ENCODE measurements at regions of chr2 and their contacts with region 1.

Region 1: DNA sequence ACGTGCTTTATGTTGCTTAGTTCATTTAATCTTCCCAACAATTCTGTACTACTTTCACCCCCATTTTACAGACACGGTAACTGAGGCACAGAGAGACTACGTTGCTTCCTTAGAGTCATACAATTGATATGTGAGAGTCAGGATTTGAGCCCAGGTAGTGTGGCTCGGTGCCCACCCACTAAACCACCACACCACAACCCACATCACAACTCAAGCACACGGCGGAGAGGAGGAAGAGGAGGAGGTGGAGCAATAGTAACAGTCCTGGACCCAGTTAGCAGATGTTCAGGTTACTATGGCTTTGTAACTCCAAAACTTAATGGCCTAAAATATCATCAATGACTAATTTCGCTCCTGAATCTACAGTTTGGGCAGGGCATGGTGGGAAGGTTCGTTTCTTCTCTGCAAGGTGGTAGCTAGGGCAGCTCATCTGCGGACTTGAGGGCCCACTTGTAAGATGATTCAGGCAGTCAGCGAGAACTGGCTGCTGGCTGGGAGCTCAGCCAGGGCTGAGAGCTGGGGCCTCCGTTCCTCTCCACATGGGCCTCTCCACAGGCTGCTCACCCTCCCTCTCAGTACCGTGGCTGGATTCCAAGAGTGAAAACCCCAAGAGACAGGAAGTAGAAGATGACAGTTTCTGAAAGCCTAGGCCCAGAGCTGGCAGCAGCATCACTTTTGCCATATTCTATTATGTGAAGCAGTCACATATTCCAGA is 167.1 kb downstream of the ZFP36L2 start:
- DNase-seq: peak; percentile 97
- H3K4me3 ChIP-seq: no peak overlapping the region
- H3K27ac ChIP-seq: peak overlapping the region; percentile 8
- H3K4me1 ChIP-seq: peaks cover 30% of the 10 kb centered on the region
- H3K27me3 ChIP-seq: no peaks in the 10 kb centered on the region
- CTCF ChIP-seq: no peak

Region 2: DNA sequence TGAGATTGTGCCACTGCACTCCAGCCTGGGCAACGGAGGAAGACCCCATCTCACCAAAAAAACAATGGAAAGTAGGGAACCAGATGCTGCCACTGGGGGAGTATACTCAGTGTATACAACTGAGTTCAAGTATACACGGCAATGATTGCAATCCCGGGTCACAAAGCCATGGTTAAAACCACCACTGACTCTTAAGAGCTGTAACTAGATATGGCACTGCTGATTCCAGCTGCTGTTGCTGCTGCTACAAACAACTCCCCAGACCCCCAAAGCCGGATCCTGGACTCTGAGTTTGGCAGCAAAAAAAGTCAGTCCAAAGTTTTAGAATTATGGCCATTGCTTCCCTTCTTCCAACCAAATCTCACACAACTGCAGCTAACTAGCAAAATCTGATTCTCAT is 654.7 kb before region 1 on chr2:
- CTCF ChIA-PET with region 1: no interaction called
- POLR2A ChIA-PET with region 1: interaction called, 11 read pairs
- intact Hi-C with region 1: no loop called
- DNase-seq: no peak
- H3K4me3 ChIP-seq: no peak overlapping the region
- H3K27ac ChIP-seq: no peak overlapping the region
- H3K4me1 ChIP-seq: no peaks in the 10 kb centered on the region
- H3K27me3 ChIP-seq: no peaks in the 10 kb centered on the region
- CTCF ChIP-seq: no peak

Measured in A673 (cell line).